HCT116 (cell line): ENCODE measurements at regions of chr12 and their contacts with region 1.

Region 1: DNA sequence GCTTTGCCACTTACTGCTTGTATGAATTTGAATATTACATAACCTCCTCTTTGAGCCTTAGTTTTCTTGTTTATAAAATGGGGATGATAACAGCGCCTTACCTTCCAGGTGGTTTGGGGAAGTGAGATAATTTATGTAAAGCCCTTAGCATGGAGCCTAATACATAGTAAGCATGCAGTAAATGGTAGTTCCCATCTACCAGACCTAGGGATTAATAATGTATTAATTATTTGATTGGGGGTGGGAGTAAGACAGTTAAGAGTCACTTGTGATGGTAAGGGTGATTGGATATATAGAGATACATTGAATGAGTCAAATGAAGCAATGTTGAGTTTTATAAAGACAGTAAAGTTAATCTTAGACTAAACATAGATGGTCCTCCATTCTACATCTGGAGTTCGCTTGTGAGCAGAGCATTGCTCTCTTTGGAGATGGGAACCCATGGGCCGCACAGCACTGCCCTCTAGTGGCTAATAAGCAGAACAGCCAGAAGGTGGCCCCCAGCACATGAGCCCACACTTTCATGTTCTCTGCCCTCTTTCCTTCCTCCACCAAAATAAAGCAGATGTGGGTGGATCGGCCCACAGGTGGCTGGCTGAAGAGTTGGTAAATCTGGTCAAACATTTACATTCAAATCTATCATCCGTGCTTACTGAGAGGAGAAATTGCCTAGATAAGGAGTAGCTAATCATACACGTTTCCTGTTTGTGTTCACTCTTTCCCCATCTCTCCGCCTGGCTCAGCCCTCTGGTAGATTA is 26.5 kb upstream of the TAMALIN start:
- DNase-seq: no peak
- ATAC-seq: peak; percentile 97
- H3K4me3 ChIP-seq: no peak overlapping the region
- H3K27ac ChIP-seq: no peak overlapping the region
- H3K4me1 ChIP-seq: no peaks in the 10 kb centered on the region
- H3K27me3 ChIP-seq: no peaks in the 10 kb centered on the region
- CTCF ChIP-seq: peak; percentile 82 to 98 (median 95)
- POLR2A ChIP-seq: no peak
- RAD21 ChIP-seq: peak; percentile 82

Region 2: DNA sequence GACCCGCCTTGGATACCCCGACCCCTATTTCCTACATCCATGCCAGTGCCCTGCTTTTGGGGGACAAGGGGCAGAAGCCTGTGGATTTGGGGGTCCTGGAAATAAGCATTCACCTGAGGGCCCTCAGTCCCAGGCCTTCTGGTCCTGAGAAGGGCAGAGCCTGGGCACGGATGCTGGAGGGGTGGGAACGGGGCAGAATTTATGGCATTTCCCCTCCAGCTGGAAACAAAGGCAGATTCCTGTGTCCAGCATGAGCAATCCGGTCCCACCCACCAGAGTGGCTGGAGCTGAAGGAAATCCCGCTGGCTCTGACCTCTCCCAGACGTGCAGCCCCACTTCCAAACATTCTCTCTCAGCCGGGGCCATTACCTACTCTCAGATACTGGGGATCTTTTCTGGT is 83.0 kb before region 1 on chr12:
- CTCF ChIA-PET with region 1: interaction called, 4 read pairs
- POLR2A ChIA-PET with region 1: no interaction called
- RAD21 ChIA-PET with region 1: no interaction called
- intact Hi-C with region 1: loop called (anchors 1 kb)
- DNase-seq: no peak
- ATAC-seq: no peak
- H3K4me3 ChIP-seq: no peak overlapping the region
- H3K27ac ChIP-seq: no peak overlapping the region
- H3K4me1 ChIP-seq: peaks cover 0 to 8% of the 10 kb centered on the region in 2 experiments; a peak in 2 of 4 replicates
- H3K27me3 ChIP-seq: no peaks in the 10 kb centered on the region
- CTCF ChIP-seq: no peak
- POLR2A ChIP-seq: no peak
- RAD21 ChIP-seq: no peak

Region 3: DNA sequence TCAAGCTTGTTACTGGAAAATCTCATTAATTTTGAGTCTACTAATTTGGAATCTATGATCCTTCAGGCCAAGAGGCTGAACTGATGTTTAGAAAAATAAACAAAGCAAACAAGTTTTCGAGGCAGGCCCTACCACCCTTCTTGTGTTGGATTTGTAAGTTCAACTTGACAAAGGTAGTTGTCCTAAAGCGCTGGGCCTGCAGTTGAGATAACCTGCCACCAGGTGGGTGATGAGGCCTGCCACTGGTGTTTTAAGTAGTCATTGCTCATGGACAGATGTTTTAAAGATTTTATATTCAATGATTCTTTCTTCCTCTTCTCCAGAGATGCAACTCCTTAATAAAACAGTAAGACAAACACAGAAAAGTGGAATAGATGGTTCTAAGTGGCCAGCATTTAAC is 53.5 kb before region 1 on chr12:
- CTCF ChIA-PET with region 1: no interaction called
- POLR2A ChIA-PET with region 1: no interaction called
- RAD21 ChIA-PET with region 1: no interaction called
- intact Hi-C with region 1: loop called (anchors 1 kb)
- DNase-seq: peak; percentile 48
- ATAC-seq: peak; percentile 70
- H3K4me3 ChIP-seq: no peak overlapping the region
- H3K27ac ChIP-seq: no peak overlapping the region
- H3K4me1 ChIP-seq: peaks cover 0 to 12% of the 10 kb centered on the region in 2 experiments; a peak in 1 of 4 replicates
- H3K27me3 ChIP-seq: no peaks in the 10 kb centered on the region
- CTCF ChIP-seq: peak; percentile 64 to 75 (median 72); a peak in 5 of 6 replicates
- POLR2A ChIP-seq: no peak
- RAD21 ChIP-seq: peak; percentile 73

Region 4: DNA sequence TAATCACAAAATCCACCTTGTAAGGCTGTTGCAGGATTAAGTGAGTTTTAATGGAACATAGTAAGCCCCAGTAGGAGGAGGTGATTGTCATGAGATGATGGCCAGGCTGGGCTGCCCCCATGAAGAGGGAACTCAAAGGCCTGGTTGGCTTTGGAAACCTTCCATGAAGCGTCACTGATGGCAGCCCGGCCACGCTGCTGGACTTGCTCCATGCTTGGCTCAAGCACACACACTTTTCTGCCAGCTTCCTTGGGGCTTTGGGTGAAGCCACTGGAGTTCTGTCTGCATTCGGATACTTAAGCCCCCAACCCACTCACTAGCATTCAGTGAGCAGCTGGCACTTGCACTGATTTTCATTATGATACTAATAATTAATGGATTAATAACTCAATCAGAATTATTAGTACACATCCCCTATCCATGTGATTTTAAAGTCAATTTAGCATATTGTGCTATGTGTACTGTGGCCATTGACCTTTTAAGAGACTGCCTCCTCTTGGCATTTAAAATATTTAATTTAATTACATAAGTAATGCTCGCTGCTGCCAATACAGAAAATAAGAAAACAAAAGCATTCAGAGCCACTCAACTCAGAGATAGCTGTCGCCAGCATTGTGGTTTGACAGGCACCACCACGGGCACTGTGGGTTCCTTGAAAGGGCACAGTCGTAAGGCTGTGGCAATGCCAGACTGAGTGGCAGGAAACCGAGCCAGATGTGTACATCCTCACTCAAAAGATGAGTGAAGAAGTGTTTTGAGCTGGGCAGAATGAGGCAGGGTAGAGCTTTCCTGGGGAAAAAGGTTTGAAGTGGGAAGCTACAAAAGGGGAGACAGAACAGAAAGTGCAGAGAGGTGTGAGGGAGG is 371.2 kb after region 1 on chr12:
- CTCF ChIA-PET with region 1: no interaction called
- POLR2A ChIA-PET with region 1: no interaction called
- RAD21 ChIA-PET with region 1: no interaction called
- intact Hi-C with region 1: no loop called
- DNase-seq: no peak
- ATAC-seq: no peak
- H3K4me3 ChIP-seq: no peak overlapping the region
- H3K27ac ChIP-seq: no peak overlapping the region
- H3K4me1 ChIP-seq: peaks cover 0 to 7% of the 10 kb centered on the region in 2 experiments; a peak in 1 of 4 replicates
- H3K27me3 ChIP-seq: no peaks in the 10 kb centered on the region; the same call in 1 of the 2 replicates
- CTCF ChIP-seq: no peak
- POLR2A ChIP-seq: no peak
- RAD21 ChIP-seq: no peak